ENCODE measurements at regions of chr20 and their contacts with region 1.

Region 1: DNA sequence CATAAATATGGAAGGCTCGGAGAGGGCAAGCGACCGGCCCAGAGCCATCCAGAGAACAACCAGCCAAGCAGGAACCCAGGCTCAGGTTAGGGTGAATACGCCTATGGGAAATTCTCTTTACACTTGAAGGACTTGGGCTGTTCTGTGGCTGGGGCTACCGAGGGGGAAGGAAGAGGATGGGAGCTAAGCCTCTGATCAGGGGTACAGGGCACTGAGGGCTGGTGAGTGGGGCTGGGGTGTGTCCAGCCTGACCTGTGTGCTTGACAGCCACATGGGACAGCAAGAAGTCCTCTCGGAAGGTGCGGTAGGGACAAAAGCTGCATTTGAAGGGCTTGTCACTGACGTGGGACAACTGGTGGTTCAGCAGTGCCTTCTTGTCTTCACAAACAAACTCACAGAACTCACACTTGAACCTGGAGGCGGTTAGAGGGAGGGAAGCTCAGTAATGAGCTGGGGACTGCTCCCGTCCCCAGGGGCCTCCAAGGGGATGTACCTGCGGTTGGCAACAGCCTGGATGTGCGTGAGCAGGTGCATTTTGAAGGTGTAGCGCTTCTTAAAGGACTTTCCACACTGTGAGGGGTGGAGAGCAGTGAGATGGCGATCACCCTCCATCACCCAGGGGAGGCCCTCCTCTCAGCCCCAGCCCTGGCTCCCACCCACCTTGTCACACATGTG is 11.9 kb downstream of the ZNF335 start:
- DNase-seq: no peak

Region 2: DNA sequence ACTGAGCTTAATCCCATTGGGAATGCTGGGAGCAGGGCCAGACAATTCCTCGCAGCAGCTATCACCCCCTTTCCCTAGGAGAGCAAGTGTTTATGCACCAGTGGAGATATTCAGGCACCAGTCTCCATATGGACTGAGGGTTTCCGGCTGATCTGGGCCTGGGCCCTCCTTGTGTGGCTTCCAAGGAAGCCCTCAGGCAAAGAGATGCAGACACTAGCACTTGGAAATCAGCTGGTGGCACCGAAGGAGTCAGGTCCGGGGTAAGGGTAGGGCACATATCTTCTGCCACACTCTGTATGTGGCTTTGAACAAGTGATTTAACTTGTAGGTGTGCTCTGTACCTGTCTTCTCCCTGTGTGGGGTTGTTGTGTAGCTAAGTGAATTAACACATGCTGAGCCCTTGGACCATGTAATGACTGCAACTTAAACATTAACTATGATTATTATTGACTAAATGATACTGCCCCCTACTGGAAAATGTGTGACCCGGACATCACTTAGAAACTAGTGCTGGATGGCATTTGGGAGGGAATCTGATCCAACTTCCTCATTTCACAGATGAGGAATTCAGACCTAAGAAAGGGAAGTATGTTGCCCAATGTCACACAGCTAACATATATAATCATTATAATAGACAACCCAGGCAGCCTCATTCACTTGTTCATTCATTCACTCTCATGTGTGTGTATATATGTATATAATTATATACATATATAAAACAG is 509.8 kb before region 1 on chr20:
- in situ Hi-C with region 1: no loop called
- DNase-seq: peak; percentile 93

Region 3: GRCh38 chr20:45555198-45555597 is 404.9 kb before region 1 on chr20:
- in situ Hi-C with region 1: no loop called
- DNase-seq: no peak

Region 4: DNA sequence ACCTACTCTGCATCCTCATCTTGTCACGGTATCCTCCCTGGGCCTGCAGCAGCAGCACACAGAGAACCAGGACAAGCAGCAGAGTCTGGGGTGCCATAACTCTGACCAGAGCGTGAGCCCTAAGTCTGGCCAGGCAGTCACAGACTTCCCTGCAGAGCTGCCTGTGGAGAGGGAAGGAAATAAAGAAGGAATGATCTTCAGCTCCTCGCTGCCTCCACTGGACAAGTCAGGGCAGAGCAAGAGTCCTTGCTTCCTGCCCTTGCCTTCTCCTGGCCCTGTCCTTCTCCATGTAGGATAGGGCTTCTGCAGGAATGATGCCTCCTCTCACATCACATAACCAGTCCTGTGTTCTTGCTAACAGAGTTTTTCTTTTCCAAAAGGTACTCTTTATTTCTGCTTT is 274.2 kb before region 1 on chr20:
- in situ Hi-C with region 1: no loop called
- DNase-seq: no peak

Region 5: GRCh38 chr20:45752746-45753145 is 207.3 kb before region 1 on chr20:
- in situ Hi-C with region 1: no loop called
- DNase-seq: no peak

Region 6: DNA sequence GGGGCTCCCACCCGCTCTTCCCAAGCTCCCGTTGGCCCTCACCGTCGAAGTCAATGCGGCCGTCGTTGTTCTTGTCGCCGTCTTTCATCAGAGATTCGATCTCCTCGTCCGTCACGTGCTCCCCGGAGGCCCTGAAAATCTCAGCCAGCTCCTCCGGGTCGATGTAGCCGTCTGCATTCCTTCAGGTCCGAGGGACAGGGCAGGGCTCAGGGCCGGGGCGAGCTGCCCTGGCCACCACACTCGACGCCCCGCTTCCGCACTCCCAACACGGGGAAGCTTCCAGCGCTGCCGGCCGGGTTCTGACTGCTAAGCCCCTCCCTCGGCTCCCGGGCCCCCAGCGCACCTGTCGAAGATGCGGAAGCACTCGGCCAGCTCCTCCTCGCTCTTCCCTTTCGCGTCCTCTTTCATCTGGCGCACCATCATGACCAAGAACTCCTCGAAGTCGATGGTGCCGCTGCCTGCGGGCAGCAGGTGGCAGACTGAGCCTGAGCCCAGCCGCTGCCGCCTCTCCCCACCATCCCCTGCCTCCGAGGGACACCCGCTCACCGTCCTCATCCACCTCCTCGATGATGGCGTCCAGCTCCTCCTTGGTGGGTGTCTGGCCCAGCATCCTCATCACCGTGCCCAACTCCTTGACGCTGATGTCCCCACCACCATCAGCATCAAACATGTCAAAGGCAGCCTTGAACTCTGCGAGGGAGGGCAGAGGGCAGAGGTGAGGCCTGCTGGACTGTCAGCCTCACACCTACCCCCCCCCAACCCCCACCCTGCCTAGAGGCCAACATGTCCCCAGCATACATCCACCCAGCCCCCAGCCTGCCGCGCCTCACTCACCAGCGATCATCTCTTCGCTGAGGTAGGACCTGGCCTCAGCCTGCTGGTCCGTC is 135.9 kb before region 1 on chr20:
- in situ Hi-C with region 1: loop called (anchors 10 kb)
- DNase-seq: peak; percentile 30

Measured in KBM-7 (cell line).